ENCODE measurements at regions of chr2 and their contacts with region 1.

Region 1: GRCh38 chr2:218995972-218996711 is 2.9 kb upstream of the CRYBA2 start:
- DNase-seq: peak; percentile 86
- H3K4me3 ChIP-seq: peak overlapping the region; percentile 39
- H3K27ac ChIP-seq: no peak overlapping the region
- H3K4me1 ChIP-seq: peaks cover 16% of the 10 kb centered on the region
- H3K27me3 ChIP-seq: peaks cover 58% of the 10 kb centered on the region
- CTCF ChIP-seq: peak; percentile 93

Region 2: DNA sequence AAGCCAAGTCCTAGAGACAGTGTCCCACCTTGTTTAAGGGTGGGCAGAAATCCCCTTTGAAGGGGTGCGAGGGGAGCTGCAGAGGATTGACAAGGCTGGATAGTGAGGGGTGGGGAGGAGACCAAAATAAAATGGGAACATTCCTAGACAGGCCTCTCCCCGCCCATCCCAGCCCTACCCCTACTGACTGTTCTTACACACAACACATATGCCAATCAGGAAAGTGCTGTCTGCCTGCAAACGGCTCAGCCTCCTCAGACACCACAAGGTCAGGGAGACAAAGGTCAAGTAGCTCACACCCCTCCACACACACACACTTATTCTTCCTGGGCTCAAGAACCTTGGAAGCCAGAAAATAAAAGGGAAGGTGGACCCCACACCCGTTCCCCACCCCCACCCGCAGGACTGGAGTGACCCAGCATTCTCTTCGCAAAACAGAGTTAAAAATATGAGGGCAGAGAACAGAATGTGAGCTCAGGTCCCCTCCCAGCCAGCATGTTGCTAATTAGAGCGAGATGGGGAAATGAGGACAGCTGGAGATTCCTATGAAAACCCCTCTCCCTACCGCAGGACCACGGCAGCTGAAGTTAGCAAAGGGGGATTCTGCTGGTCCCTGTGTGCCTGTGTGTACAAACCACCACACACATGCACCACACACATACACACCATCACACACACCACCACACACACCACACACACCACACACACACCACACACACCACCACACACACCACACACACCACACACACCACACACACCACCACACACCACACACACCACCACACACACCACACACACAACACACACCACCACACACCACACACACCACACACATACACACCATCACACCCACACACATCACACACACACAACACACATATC is 1191.1 kb before region 1 on chr2:
- CTCF ChIA-PET with region 1: no interaction called
- POLR2A ChIA-PET with region 1: no interaction called
- intact Hi-C with region 1: no loop called
- DNase-seq: peak; percentile 41
- H3K4me3 ChIP-seq: no peak overlapping the region
- H3K27ac ChIP-seq: no peak overlapping the region
- H3K4me1 ChIP-seq: no peaks in the 10 kb centered on the region
- H3K27me3 ChIP-seq: no peaks in the 10 kb centered on the region
- CTCF ChIP-seq: no peak

Region 3: DNA sequence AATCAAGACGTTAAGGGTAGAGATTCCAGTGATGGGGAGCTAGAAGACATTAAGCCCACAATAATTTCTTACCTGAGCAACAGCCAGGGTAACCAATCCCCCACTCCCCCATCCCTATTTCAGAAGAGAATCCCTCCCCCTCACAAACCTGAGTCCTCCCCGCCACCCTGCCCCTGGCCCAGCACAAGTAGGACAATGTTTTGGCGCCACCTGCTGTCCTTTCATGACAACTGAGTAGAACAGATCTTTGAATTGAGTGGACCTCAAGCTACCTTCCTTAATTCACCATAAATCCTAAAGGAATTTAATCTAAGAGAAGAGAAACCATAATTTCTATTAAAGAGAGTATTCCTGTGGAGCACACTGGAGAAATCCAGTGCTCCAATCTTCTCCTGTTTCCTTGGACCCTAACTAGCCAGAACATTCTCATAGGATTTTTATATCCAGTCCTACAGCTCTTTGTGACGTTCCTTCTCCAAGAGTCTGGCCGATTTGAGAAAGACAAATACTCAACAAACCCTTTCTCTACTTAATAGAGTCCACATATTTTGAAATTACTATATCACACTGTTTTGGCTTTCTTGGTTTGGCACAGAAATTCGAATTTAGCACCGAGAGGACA is 123.4 kb after region 1 on chr2:
- CTCF ChIA-PET with region 1: interaction called, 10 read pairs
- POLR2A ChIA-PET with region 1: no interaction called
- intact Hi-C with region 1: no loop called
- DNase-seq: peak; percentile 72
- H3K4me3 ChIP-seq: no peak overlapping the region
- H3K27ac ChIP-seq: no peak overlapping the region
- H3K4me1 ChIP-seq: peaks cover 21% of the 10 kb centered on the region
- H3K27me3 ChIP-seq: no peaks in the 10 kb centered on the region
- CTCF ChIP-seq: peak; percentile 89

Region 4: DNA sequence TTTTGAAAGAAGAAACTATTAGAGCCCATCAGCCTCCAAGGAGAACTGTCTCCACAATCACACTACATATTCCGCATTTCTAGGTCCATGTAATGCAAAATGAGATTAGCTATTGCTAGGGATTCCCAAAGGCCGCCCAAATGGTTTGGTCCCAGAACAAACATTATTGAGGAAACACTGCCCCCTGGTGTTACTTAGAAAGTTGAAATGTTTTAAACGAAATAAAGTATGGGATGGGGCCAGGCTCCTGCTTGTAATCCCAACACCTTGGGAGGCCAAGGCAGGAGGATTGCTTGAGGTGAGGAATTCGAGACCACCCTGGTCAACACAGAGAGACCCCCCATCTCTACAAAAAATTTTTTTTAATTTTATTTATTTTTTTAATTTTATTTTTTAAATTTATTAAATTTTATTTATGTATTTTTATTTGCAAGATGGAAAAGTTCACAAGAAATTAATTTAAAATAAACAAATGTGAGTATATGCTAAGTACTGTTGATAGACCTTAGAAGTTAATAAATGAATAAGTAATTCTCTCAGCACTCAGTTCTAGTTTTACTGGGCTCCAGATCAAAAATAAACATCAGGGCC is 159.0 kb after region 1 on chr2:
- CTCF ChIA-PET with region 1: interaction called, 18 read pairs
- POLR2A ChIA-PET with region 1: no interaction called
- intact Hi-C with region 1: no loop called
- DNase-seq: peak; percentile 91
- H3K4me3 ChIP-seq: no peak overlapping the region
- H3K27ac ChIP-seq: no peak overlapping the region
- H3K4me1 ChIP-seq: peaks cover 4% of the 10 kb centered on the region
- H3K27me3 ChIP-seq: no peaks in the 10 kb centered on the region
- CTCF ChIP-seq: peak; percentile 56

Region 5: DNA sequence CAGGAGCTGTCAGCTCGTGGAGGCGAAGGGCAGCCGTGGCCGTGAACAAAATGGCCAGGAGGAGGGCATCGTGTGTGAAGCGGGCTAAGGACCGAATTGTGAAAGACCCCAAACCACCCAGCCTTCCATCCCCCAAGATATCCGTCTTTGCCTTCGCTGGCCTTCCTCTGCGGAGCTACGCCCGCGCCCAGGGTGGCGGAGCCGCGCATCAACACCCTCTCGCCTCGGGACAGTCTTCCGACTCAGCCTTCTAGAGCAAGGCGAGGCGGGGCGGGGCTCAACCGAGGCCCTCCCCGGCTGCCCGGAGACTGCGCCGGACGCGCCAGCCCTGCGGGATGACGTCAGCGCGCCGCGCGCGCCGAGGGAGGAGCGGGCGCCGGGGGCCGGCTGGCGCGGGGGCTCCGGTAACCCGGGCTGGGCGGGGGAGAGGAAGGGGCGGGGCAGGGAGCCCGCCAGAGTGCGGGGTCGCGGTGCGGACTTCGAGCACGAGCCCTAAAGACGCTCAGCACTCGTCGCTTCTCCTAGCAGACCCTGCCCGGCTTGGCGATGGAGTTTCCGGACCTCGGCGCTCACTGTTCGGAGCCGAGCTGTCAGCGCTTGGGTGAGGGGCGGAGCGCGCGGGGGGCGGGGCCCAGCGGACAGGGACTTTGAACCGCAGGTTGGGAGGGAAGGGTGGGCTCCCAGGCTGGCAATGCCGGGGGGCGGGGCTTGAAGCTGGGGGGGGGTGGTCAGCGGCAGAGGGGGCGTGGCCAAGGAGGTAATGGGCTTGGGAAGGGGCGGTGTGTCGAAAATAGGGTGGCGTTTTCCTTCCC is 210.5 kb after region 1 on chr2 and contains the start of gene ZFAND2B:
- CTCF ChIA-PET with region 1: interaction called, 11 read pairs
- POLR2A ChIA-PET with region 1: no interaction called
- intact Hi-C with region 1: no loop called
- DNase-seq: peak; percentile 96
- H3K4me3 ChIP-seq: peak within 1 kb of the TSS; percentile 75
- H3K27ac ChIP-seq: peak within 1 kb of the TSS; percentile 78
- H3K4me1 ChIP-seq: peaks cover 15% of the 10 kb centered on the region
- H3K27me3 ChIP-seq: no peaks in the 10 kb centered on the region
- CTCF ChIP-seq: no peak
- total RNA-seq, gene ZFAND2B: 20.0 and 23.7 TPM in 2 replicates

Measured in A673 (cell line).